ENCODE measurements at regions of chr1 and their contacts with region 1.

Region 1: GRCh38 chr1:114270282-114270681 is 116.6 kb upstream of the SYT6 start:
- DNase-seq: no peak
- H3K4me3 Mint-ChIP-seq: no peak overlapping the region
- H3K27ac Mint-ChIP-seq: no peak overlapping the region
- H3K4me1 Mint-ChIP-seq: peaks cover 2% of the 10 kb centered on the region
- H3K27me3 Mint-ChIP-seq: peaks cover 32% of the 10 kb centered on the region

Region 2: GRCh38 chr1:114282751-114283403 is 12.6 kb after region 1 on chr1:
- CTCF ChIA-PET with region 1: interaction called, 25 read pairs
- POLR2A ChIA-PET with region 1: no interaction called
- DNase-seq: peak; percentile 88
- H3K4me3 Mint-ChIP-seq: no peak overlapping the region
- H3K27ac Mint-ChIP-seq: no peak overlapping the region
- H3K4me1 Mint-ChIP-seq: peaks cover 3% of the 10 kb centered on the region
- H3K27me3 Mint-ChIP-seq: peaks cover 3% of the 10 kb centered on the region

Measured in activated CD4-positive, alpha-beta memory T cell treated with anti-CD3 and anti-CD28 coated beads, Interleukin-2, amount 10 ng/mL, durations not matched to agents 7 days and 5 days (primary cell).